A673 (cell line): ENCODE measurements at regions of chr11 and their contacts with region 1.

Region 1: GRCh38 chr11:8558436-8558835 is 35.6 kb downstream of the STK33 start:
- DNase-seq: no peak
- H3K4me3 ChIP-seq: no peak overlapping the region
- H3K27ac ChIP-seq: no peak overlapping the region
- H3K4me1 ChIP-seq: no peaks in the 10 kb centered on the region
- H3K27me3 ChIP-seq: peaks cover 52% of the 10 kb centered on the region
- CTCF ChIP-seq: no peak

Region 2: DNA sequence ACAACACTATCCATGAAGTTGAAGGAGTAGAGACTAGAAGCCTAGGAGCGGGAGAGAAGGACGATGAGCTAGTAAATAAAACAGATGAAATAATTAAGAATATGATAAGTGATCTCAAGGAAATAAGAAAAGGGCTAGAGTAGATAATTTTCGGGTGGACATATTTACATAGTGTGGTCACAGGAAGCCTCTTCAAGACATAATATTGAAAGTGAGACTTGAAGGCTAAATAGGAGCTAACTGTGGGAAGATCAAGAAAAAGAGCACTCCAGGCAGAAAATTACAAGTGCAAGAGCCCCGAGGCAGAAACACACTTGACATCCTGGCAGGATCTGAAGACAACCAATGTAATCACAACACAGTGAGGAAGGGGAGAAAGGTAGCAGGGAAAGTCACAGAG is 1056.5 kb before region 1 on chr11:
- CTCF ChIA-PET with region 1: no interaction called
- POLR2A ChIA-PET with region 1: no interaction called
- intact Hi-C with region 1: no loop called
- DNase-seq: no peak
- H3K4me3 ChIP-seq: no peak overlapping the region
- H3K27ac ChIP-seq: no peak overlapping the region
- H3K4me1 ChIP-seq: no peaks in the 10 kb centered on the region
- H3K27me3 ChIP-seq: no peaks in the 10 kb centered on the region
- CTCF ChIP-seq: no peak

Region 3: GRCh38 chr11:8267831-8268529 is 290.5 kb before region 1 on chr11:
- CTCF ChIA-PET with region 1: no interaction called
- POLR2A ChIA-PET with region 1: no interaction called
- intact Hi-C with region 1: no loop called
- DNase-seq: no peak
- H3K4me3 ChIP-seq: no peak overlapping the region
- H3K27ac ChIP-seq: no peak overlapping the region
- H3K4me1 ChIP-seq: peaks cover 3% of the 10 kb centered on the region
- H3K27me3 ChIP-seq: peaks cover 97% of the 10 kb centered on the region
- CTCF ChIP-seq: no peak

Region 4: GRCh38 chr11:8323161-8323935 is 235.1 kb before region 1 on chr11:
- CTCF ChIA-PET with region 1: no interaction called
- POLR2A ChIA-PET with region 1: interaction called, 22 read pairs
- intact Hi-C with region 1: no loop called
- DNase-seq: no peak
- H3K4me3 ChIP-seq: no peak overlapping the region
- H3K27ac ChIP-seq: no peak overlapping the region
- H3K4me1 ChIP-seq: peaks cover 5% of the 10 kb centered on the region
- H3K27me3 ChIP-seq: peaks cover 75% of the 10 kb centered on the region
- CTCF ChIP-seq: no peak

Region 5: GRCh38 chr11:8899119-8899753 is 340.8 kb after region 1 on chr11:
- CTCF ChIA-PET with region 1: no interaction called
- POLR2A ChIA-PET with region 1: no interaction called
- intact Hi-C with region 1: no loop called
- DNase-seq: no peak
- H3K4me3 ChIP-seq: no peak overlapping the region
- H3K27ac ChIP-seq: no peak overlapping the region
- H3K4me1 ChIP-seq: no peaks in the 10 kb centered on the region
- H3K27me3 ChIP-seq: no peaks in the 10 kb centered on the region
- CTCF ChIP-seq: no peak